HEK293 (cell line): ENCODE measurements at regions of chr15 and their contacts with region 1.

Region 1: DNA sequence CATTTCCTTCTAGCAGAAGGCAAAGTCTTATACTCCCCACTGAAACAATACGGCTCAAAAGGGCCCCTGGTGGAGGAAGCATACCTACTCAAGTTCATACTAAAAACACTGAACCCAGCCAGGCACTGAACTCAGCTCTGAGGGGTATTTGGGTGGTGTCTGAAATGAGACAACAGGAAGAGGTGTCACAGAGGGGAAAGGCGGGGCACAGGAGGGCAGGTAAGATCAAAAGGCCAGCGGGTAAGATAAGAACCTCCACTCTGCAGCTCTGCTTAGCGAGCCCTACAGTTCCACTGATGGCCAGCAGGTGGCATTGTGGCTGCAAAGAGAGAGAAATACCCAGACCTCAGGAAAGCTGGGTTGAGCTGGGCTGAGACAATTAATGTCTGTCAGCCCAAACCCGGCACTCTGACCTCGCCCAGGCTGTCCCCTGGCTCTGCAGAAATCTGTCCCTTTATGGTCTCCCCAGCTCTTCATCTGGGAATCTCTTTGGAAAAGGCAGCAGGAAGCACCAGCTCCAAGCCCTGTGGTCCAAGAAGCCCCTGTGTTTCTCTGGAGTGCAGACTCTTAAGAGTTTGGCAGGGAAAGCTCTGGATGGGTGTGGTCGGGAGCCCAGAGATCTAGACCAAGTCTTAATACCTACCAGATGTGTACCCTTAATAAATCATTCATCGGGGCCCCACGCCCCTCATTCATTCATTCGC is 8.4 kb downstream of the MFGE8 start:
- H3K4me3 ChIP-seq: no peak overlapping the region
- H3K27ac ChIP-seq: no peak overlapping the region
- H3K4me1 ChIP-seq: peaks cover 4% of the 10 kb centered on the region
- CTCF ChIP-seq: peak; percentile 87

Region 2: DNA sequence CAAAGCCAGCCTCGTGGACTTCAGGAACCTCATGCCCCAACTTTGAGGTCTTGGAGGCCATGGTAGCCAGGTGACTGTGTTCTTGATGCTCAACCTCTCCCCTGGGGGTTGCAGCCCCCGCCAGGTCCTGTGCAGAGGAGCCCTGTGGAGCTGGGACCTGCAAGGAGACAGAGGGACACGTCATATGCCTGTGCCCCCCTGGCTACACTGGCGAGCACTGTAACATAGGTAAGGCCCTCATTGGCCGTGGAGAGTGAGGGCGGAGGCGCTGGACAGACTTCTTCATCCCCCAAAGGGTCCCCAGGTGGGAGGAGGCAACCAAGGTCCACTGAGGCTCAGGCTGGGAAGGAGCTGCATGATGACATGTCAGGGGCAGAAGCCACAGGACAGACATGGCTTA is 44.6 kb before region 1 on chr15:
- CTCF ChIA-PET with region 1: no interaction called
- POLR2A ChIA-PET with region 1: no interaction called
- H3K4me3 ChIP-seq: no peak overlapping the region
- H3K27ac ChIP-seq: no peak overlapping the region
- H3K4me1 ChIP-seq: no peaks in the 10 kb centered on the region
- CTCF ChIP-seq: no peak

Region 3: GRCh38 chr15:88887068-88887580 is 17.7 kb before region 1 on chr15:
- CTCF ChIA-PET with region 1: interaction called, 11 read pairs
- POLR2A ChIA-PET with region 1: no interaction called
- H3K4me3 ChIP-seq: no peak overlapping the region
- H3K27ac ChIP-seq: no peak overlapping the region
- H3K4me1 ChIP-seq: no peaks in the 10 kb centered on the region
- CTCF ChIP-seq: no peak

Region 4: GRCh38 chr15:88987934-88988671 is 83.3 kb after region 1 on chr15:
- CTCF ChIA-PET with region 1: interaction called, 11 read pairs
- POLR2A ChIA-PET with region 1: no interaction called
- H3K4me3 ChIP-seq: no peak overlapping the region
- H3K27ac ChIP-seq: no peak overlapping the region
- H3K4me1 ChIP-seq: peaks cover 5% of the 10 kb centered on the region; the same call in 1 of the 2 replicates
- CTCF ChIP-seq: no peak

Region 5: GRCh38 chr15:89003865-89004725 is 99.3 kb after region 1 on chr15:
- CTCF ChIA-PET with region 1: interaction called, 53 read pairs
- POLR2A ChIA-PET with region 1: no interaction called
- H3K4me3 ChIP-seq: no peak overlapping the region
- H3K27ac ChIP-seq: no peak overlapping the region
- H3K4me1 ChIP-seq: no peaks in the 10 kb centered on the region
- CTCF ChIP-seq: peak; percentile 47; the same call in 1 of the 2 replicates

Region 6: GRCh38 chr15:89057504-89058133 is 152.8 kb after region 1 on chr15:
- CTCF ChIA-PET with region 1: interaction called, 13 read pairs
- POLR2A ChIA-PET with region 1: no interaction called
- H3K4me3 ChIP-seq: no peak overlapping the region
- H3K27ac ChIP-seq: no peak overlapping the region
- H3K4me1 ChIP-seq: no peaks in the 10 kb centered on the region
- CTCF ChIP-seq: peak; percentile 87; the same call in 1 of the 2 replicates

Region 7: GRCh38 chr15:89171136-89172072 is 266.6 kb after region 1 on chr15:
- CTCF ChIA-PET with region 1: interaction called, 56 read pairs
- POLR2A ChIA-PET with region 1: interaction called, 4 read pairs
- H3K4me3 ChIP-seq: no peak overlapping the region
- H3K27ac ChIP-seq: no peak overlapping the region
- H3K4me1 ChIP-seq: peaks cover 23% of the 10 kb centered on the region
- CTCF ChIP-seq: 0 out of 2 replicates have a peak, but pooled peaks have one; percentile 24